ENCODE measurements at regions of chr5 and their contacts with region 1.

Region 1: GRCh38 chr5:126544087-126544740 is 50.8 kb downstream of the ALDH7A1 start:
- DNase-seq: peak; percentile 32
- ATAC-seq: peak; percentile 91
- H3K4me3 ChIP-seq: no peak overlapping the region
- H3K27ac ChIP-seq: no peak overlapping the region
- H3K4me1 ChIP-seq: no peaks in the 10 kb centered on the region
- H3K27me3 ChIP-seq: no peaks in the 10 kb centered on the region
- CTCF ChIP-seq: peak; percentile 86

Region 2: DNA sequence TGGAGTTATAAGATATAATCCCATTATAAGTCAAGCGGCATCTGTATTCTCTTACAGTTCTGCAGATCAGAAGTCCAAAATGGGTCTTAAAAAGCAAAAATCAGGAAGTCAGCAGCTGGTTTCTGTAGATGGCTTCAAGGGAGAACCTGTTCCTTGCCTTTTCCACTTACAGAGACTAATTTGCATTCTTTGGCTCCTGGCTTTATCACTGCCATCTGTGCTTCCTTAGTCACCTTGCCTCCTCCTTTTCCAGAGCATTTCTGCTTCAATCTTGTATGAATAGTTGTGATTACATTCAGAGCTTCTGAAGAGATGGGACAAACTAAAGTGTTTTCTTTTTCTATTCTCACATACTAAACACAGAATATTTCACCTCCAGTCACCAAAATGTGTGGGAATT is 768.3 kb before region 1 on chr5:
- CTCF ChIA-PET with region 1: interaction called, 10 read pairs
- POLR2A ChIA-PET with region 1: no interaction called
- in situ Hi-C with region 1: no loop called
- intact Hi-C with region 1: no loop called
- DNase-seq: no peak
- ATAC-seq: no peak
- H3K4me3 ChIP-seq: no peak overlapping the region
- H3K27ac ChIP-seq: no peak overlapping the region
- H3K4me1 ChIP-seq: no peaks in the 10 kb centered on the region
- H3K27me3 ChIP-seq: no peaks in the 10 kb centered on the region
- CTCF ChIP-seq: no peak

Region 3: GRCh38 chr5:126208711-126209305 is 335.4 kb before region 1 on chr5:
- CTCF ChIA-PET with region 1: no interaction called
- POLR2A ChIA-PET with region 1: no interaction called
- in situ Hi-C with region 1: no loop called
- intact Hi-C with region 1: no loop called
- DNase-seq: no peak
- ATAC-seq: no peak
- H3K4me3 ChIP-seq: no peak overlapping the region
- H3K27ac ChIP-seq: no peak overlapping the region
- H3K4me1 ChIP-seq: no peaks in the 10 kb centered on the region
- H3K27me3 ChIP-seq: no peaks in the 10 kb centered on the region
- CTCF ChIP-seq: no peak

Region 4: GRCh38 chr5:126309860-126310259 is 234.4 kb before region 1 on chr5:
- CTCF ChIA-PET with region 1: no interaction called
- POLR2A ChIA-PET with region 1: interaction called, 15 read pairs
- in situ Hi-C with region 1: no loop called
- intact Hi-C with region 1: no loop called
- DNase-seq: no peak
- ATAC-seq: no peak
- H3K4me3 ChIP-seq: no peak overlapping the region
- H3K27ac ChIP-seq: no peak overlapping the region
- H3K4me1 ChIP-seq: no peaks in the 10 kb centered on the region
- H3K27me3 ChIP-seq: no peaks in the 10 kb centered on the region; the same call in 1 of the 2 replicates
- CTCF ChIP-seq: no peak

Region 5: GRCh38 chr5:126354012-126354857 is 190.0 kb before region 1 on chr5:
- CTCF ChIA-PET with region 1: interaction called, 3 read pairs
- POLR2A ChIA-PET with region 1: no interaction called
- in situ Hi-C with region 1: loop called (anchors 25 kb)
- intact Hi-C with region 1: loop called (anchors 1 kb)
- DNase-seq: peak; percentile 58
- ATAC-seq: peak; percentile 85
- H3K4me3 ChIP-seq: no peak overlapping the region; a peak in 2 of 4 replicates
- H3K27ac ChIP-seq: peak overlapping the region; percentile 77
- H3K4me1 ChIP-seq: peaks cover 12% of the 10 kb centered on the region
- H3K27me3 ChIP-seq: no peaks in the 10 kb centered on the region
- CTCF ChIP-seq: peak; percentile 59; the same call in 1 of the 2 replicates

Region 6: GRCh38 chr5:126370796-126371718 is 173.2 kb before region 1 on chr5:
- CTCF ChIA-PET with region 1: interaction called, 11 read pairs
- POLR2A ChIA-PET with region 1: no interaction called
- in situ Hi-C with region 1: loop called (anchors 25 kb)
- intact Hi-C with region 1: no loop called
- DNase-seq: no peak
- ATAC-seq: peak; percentile 85
- H3K4me3 ChIP-seq: no peak overlapping the region
- H3K27ac ChIP-seq: peak overlapping the region; percentile 67
- H3K4me1 ChIP-seq: peaks cover 23% of the 10 kb centered on the region
- H3K27me3 ChIP-seq: no peaks in the 10 kb centered on the region
- CTCF ChIP-seq: no peak

Region 7: GRCh38 chr5:126594676-126595485 is 50.7 kb after region 1 on chr5 and contains the start of gene ALDH7A1:
- CTCF ChIA-PET with region 1: interaction called, 12 read pairs
- POLR2A ChIA-PET with region 1: no interaction called
- in situ Hi-C with region 1: no loop called
- intact Hi-C with region 1: loop called (anchors 2 kb)
- DNase-seq: peak; percentile 77
- ATAC-seq: peak; percentile 98
- H3K4me3 ChIP-seq: peak within 1 kb of the TSS; percentile 61 to 67
- H3K27ac ChIP-seq: peak within 1 kb of the TSS; percentile 81
- H3K4me1 ChIP-seq: peaks cover 14% of the 10 kb centered on the region; the same call in 1 of the 2 replicates
- H3K27me3 ChIP-seq: no peaks in the 10 kb centered on the region
- CTCF ChIP-seq: peak; percentile 84
- total RNA-seq, gene ALDH7A1: 52.9 TPM

Measured in Panc1 (cell line).